ENCODE measurements at regions of chr4 and their contacts with region 1.

Region 1: DNA sequence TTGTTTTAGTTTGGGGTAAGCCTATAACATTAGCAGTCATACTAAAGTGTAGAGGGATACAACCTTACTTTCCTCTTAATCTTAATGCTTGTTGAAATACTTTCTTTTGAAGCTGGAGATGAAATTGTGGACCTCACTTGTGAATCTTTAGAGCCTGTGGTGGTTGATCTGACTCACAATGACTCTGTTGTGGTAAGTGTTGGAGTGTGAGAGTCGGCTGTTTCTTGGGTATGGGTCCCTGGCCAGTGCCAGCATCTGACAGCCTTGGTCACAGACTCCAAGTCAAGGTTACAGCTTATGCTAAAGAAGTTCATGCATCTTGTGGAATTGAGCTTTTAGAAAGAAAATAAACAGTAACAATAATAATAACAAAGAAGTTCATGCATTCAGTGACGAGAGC is 31.6 kb downstream of the RNF4 start:
- DNase-seq: no peak
- H3K4me3 ChIP-seq: no peak overlapping the region
- H3K27me3 ChIP-seq: no peaks in the 10 kb centered on the region
- CTCF ChIP-seq: no peak

Region 2: DNA sequence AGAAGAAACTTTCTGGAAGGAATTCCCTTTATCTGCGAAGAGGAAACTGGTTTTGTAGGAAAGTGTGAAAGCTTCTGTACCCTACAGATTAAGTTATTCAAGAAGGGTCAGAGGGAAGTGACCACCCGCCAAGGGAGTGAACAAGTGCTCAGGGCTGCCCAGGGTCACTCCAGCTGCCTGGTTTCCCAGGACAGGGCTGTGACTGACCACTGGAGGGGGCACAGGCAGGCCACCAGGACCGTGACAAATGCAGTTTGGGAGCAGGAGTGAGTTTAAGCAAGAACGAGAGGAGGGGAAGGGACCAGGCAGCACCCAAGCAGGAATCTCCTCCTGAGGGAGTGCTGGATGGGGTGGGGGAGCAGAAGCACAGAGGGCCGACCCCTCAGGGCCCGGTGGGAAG is 116.3 kb before region 1 on chr4:
- CTCF ChIA-PET with region 1: no interaction called
- POLR2A ChIA-PET with region 1: no interaction called
- DNase-seq: no peak
- H3K4me3 ChIP-seq: no peak overlapping the region
- H3K27me3 ChIP-seq: peaks cover 7% of the 10 kb centered on the region; the same call in 1 of the 2 replicates
- CTCF ChIP-seq: no peak

Region 3: DNA sequence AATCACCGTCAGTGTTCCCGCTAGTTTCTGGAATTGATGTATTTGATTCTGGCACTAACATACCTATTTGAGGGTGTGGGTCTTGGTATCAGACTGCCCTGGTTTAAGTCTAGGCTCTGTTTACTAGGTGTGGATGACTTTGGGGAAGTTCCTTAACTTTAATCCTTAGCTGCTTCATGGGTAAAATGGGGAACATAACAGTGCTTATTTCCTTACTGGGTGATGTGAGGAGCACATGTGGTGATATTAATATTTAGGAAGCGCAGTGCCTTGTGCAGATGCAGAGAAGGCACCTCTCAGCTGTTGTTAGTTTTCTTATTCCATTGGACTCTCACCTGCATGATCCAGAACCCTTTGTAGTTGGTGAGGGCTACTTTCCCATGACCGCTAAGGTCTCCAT is 14.6 kb before region 1 on chr4:
- CTCF ChIA-PET with region 1: no interaction called
- POLR2A ChIA-PET with region 1: no interaction called
- DNase-seq: no peak
- H3K4me3 ChIP-seq: no peak overlapping the region
- H3K27me3 ChIP-seq: no peaks in the 10 kb centered on the region
- CTCF ChIP-seq: no peak

Region 4: DNA sequence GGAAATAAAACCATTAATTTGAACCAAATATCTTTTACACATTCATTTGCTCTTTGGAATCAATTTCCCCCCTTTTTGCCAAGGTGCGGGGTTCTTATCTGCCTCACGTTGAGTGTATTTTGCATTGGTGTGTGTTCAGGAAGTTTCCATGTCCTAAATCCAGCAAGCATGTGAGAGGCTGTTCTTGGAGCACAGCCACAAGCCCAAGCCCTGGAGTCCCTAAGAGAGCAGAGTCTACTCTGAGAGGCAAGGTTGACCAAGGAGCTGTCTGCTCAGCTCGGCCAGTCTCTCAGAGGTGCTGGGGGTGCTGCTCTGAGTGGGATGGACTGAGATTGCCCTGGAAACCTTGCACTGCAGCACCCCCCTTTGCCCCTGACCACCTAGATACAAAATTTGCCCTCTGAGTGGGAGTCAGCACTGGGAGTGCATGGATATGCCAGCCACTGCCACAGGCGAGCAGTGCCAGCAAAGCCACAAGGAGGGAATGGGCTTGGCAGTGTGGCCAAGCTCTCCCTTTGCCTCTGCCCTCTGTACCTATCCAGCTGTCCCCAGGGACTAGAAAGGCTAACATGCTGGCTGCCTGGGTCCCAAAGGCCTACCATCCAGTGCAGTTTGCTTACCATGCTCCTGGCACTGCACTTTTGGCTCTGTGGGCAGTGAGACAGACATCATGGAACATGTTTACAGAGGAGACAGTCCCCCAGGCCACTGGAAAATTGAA is 15.4 kb after region 1 on chr4:
- CTCF ChIA-PET with region 1: no interaction called
- POLR2A ChIA-PET with region 1: no interaction called
- DNase-seq: no peak
- H3K4me3 ChIP-seq: no peak overlapping the region
- H3K27me3 ChIP-seq: no peaks in the 10 kb centered on the region
- CTCF ChIP-seq: no peak

Region 5: GRCh38 chr4:2526559-2526958 is 26.0 kb after region 1 on chr4:
- CTCF ChIA-PET with region 1: no interaction called
- POLR2A ChIA-PET with region 1: interaction called, 10 read pairs
- DNase-seq: no peak
- H3K4me3 ChIP-seq: no peak overlapping the region
- H3K27me3 ChIP-seq: no peaks in the 10 kb centered on the region
- CTCF ChIP-seq: no peak

Region 6: GRCh38 chr4:2560167-2560566 is 59.6 kb after region 1 on chr4:
- CTCF ChIA-PET with region 1: no interaction called
- POLR2A ChIA-PET with region 1: no interaction called
- DNase-seq: no peak
- H3K4me3 ChIP-seq: no peak overlapping the region
- H3K27me3 ChIP-seq: no peaks in the 10 kb centered on the region
- CTCF ChIP-seq: no peak